ENCODE measurements at regions of chr1 and their contacts with region 1.

Region 1: GRCh38 chr1:160376525-160377131 is 9.8 kb downstream of the NHLH1 start:
- DNase-seq: peak; percentile 72
- ATAC-seq: peak; percentile 86
- H3K4me3 ChIP-seq: no peak overlapping the region
- H3K27ac ChIP-seq: no peak overlapping the region
- H3K4me1 ChIP-seq: no peaks in the 10 kb centered on the region
- H3K27me3 ChIP-seq: peaks cover 10% of the 10 kb centered on the region; the same call in 1 of the 2 replicates
- CTCF ChIP-seq: peak; percentile 93
- POLR2A ChIP-seq: no peak; the same call in 1 of the 2 replicates
- RAD21 ChIP-seq: peak; percentile 92

Region 2: GRCh38 chr1:159936273-159936904 is 440.2 kb before region 1 on chr1:
- CTCF ChIA-PET with region 1: no interaction called
- POLR2A ChIA-PET with region 1: no interaction called
- dilution Hi-C with region 1: no loop called
- in situ Hi-C with region 1: loop called (anchors 10 kb)
- intact Hi-C with region 1: loop called (anchors 10 kb)
- DNase-seq: no peak
- ATAC-seq: peak; percentile 98
- H3K4me3 ChIP-seq: no peak overlapping the region
- H3K27ac ChIP-seq: no peak overlapping the region
- H3K4me1 ChIP-seq: no peaks in the 10 kb centered on the region
- H3K27me3 ChIP-seq: peaks cover 38% of the 10 kb centered on the region
- CTCF ChIP-seq: peak; percentile 93
- POLR2A ChIP-seq: no peak
- RAD21 ChIP-seq: peak; percentile 94

Region 3: DNA sequence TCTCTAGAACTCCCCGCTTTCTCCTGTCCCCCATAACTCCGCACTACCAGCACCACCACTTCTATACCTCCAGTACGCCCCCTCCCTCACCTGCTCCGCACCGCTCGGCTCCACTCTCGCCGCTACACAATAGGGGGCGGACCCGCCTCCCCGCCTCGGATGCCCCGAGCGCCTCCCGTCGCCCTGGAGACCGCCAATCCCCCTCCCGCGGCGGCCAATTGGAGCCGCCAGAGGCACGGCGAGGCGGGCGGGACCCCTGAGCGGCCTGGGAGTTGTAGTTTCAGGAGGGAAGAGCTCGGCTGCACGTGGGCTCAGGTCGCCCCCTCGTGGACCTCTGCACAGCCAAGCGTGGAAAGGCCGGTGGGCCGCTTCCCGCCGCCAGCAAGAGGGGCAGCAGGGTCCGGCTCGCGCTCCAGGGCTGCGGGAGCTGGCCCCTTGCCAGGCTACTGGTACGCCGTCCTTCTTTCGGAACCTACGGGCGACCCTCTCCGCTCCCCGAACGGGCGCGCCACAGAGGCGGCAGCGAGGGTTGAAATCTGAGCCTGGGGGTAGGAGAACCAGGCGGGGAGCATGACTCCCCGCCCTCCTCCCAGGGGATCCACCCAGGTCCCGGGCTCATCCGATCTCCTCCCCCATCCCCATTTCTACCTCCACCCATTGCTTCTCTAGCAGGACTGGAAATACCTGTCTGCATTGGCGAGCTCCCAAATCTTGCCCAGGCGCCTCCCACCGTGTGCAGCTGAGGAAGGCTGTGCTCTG is 431.0 kb before region 1 on chr1 and contains the start of gene IGSF9:
- CTCF ChIA-PET with region 1: no interaction called
- POLR2A ChIA-PET with region 1: no interaction called
- dilution Hi-C with region 1: no loop called
- in situ Hi-C with region 1: no loop called
- intact Hi-C with region 1: loop called (anchors 10 kb)
- DNase-seq: peak; percentile 49
- ATAC-seq: peak; percentile 96
- H3K4me3 ChIP-seq: peak within 1 kb of the TSS; percentile 34
- H3K27ac ChIP-seq: no peak within 1 kb of the TSS
- H3K4me1 ChIP-seq: no peaks in the 10 kb centered on the region; the same call in 1 of the 2 replicates
- H3K27me3 ChIP-seq: peaks cover 61% of the 10 kb centered on the region
- CTCF ChIP-seq: peak; percentile 39
- POLR2A ChIP-seq: no peak
- RAD21 ChIP-seq: peak; percentile 42
- total RNA-seq, gene IGSF9: not detected in 2 replicates

Region 4: DNA sequence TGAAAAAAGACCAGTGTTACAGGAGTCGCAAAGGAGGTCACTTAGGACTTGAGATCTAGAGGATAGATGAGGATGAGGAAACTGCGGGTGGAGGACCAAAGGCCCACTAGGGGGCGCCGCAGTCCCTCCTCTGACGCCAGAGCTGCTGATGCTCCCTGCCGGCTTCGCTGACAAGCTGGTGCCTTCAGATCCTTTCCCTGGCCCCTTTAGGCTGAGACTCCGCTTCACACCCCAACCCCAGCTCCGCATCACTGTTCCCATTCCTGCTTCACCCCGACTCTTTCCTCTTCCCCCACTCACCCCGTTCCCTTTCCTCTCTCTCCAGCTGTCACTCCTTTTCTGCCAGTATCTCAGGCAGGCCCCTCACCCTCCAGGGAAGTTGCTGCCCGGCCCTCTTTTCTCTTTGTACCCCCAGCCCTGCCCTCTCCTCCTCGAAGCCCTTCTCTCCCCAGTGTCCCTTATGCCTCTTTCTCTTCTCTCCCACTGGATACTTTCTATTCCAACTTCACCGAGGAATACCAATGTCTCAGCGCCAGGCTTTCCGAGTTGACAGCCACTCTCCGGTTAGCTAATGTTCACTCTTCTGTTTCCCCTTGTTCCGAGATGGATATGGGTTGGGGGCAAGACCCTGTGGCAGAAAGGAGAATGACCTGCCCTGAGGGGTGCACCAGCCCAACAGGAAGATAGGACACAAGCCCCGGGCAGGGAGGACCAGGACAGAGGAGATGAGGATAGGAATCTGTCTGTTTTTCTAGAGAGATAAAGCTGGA is 290.8 kb before region 1 on chr1:
- CTCF ChIA-PET with region 1: interaction called, 12 read pairs
- POLR2A ChIA-PET with region 1: no interaction called
- dilution Hi-C with region 1: no loop called
- in situ Hi-C with region 1: no loop called
- intact Hi-C with region 1: loop called (anchors 1 kb)
- DNase-seq: peak; percentile 64
- ATAC-seq: peak; percentile 92
- H3K4me3 ChIP-seq: no peak overlapping the region
- H3K27ac ChIP-seq: no peak overlapping the region
- H3K4me1 ChIP-seq: peaks cover 3% of the 10 kb centered on the region; the same call in 1 of the 2 replicates
- H3K27me3 ChIP-seq: peaks cover 41% of the 10 kb centered on the region
- CTCF ChIP-seq: peak; percentile 93
- POLR2A ChIP-seq: no peak
- RAD21 ChIP-seq: peak; percentile 73

Region 5: GRCh38 chr1:160098852-160099561 is 277.6 kb before region 1 on chr1:
- CTCF ChIA-PET with region 1: interaction called, 8 read pairs
- POLR2A ChIA-PET with region 1: no interaction called
- dilution Hi-C with region 1: no loop called
- in situ Hi-C with region 1: no loop called
- intact Hi-C with region 1: loop called (anchors 1 kb)
- DNase-seq: peak; percentile 87
- ATAC-seq: peak; percentile 95
- H3K4me3 ChIP-seq: peak overlapping the region; percentile 64
- H3K27ac ChIP-seq: 0 out of 2 replicates have a peak overlapping the region, but pooled peaks have one; percentile 7
- H3K4me1 ChIP-seq: peaks cover 16% of the 10 kb centered on the region
- H3K27me3 ChIP-seq: no peaks in the 10 kb centered on the region; the same call in 1 of the 2 replicates
- CTCF ChIP-seq: no peak
- POLR2A ChIP-seq: no peak
- RAD21 ChIP-seq: no peak

Region 6: GRCh38 chr1:160291248-160292220 is 85.1 kb before region 1 on chr1:
- CTCF ChIA-PET with region 1: no interaction called
- POLR2A ChIA-PET with region 1: no interaction called
- dilution Hi-C with region 1: no loop called
- in situ Hi-C with region 1: no loop called
- intact Hi-C with region 1: loop called (anchors 1 kb)
- DNase-seq: peak; percentile 70
- ATAC-seq: peak; percentile 71
- H3K4me3 ChIP-seq: no peak overlapping the region
- H3K27ac ChIP-seq: no peak overlapping the region
- H3K4me1 ChIP-seq: no peaks in the 10 kb centered on the region
- H3K27me3 ChIP-seq: no peaks in the 10 kb centered on the region
- CTCF ChIP-seq: peak; percentile 66
- POLR2A ChIP-seq: no peak
- RAD21 ChIP-seq: peak; percentile 52

Region 7: GRCh38 chr1:160354388-160354985 is 22.1 kb before region 1 on chr1:
- CTCF ChIA-PET with region 1: interaction called, 8 read pairs
- POLR2A ChIA-PET with region 1: interaction called, 16 read pairs
- dilution Hi-C with region 1: no loop called
- in situ Hi-C with region 1: no loop called
- intact Hi-C with region 1: no loop called
- DNase-seq: peak; percentile 18
- ATAC-seq: peak; percentile 44; the same call in 1 of the 2 replicates
- H3K4me3 ChIP-seq: no peak overlapping the region
- H3K27ac ChIP-seq: no peak overlapping the region
- H3K4me1 ChIP-seq: no peaks in the 10 kb centered on the region
- H3K27me3 ChIP-seq: no peaks in the 10 kb centered on the region
- CTCF ChIP-seq: peak; percentile 45; the same call in 1 of the 2 replicates
- POLR2A ChIP-seq: no peak
- RAD21 ChIP-seq: peak; percentile 29

Measured in IMR-90 (cell line).